Body of pancreas (tissue), 4 donors: ENCODE measurements at regions of chr5 and their contacts with region 1.

Region 1: GRCh38 chr5:79318935-79319614 is 83.1 kb downstream of the JMY start:
- DNase-seq: no peak
- ATAC-seq: no peak
- H3K4me3 ChIP-seq: no peak overlapping the region
- H3K27ac ChIP-seq: no peak overlapping the region
- H3K4me1 ChIP-seq: no peaks in the 10 kb centered on the region
- H3K27me3 ChIP-seq: no peaks in the 10 kb centered on the region
- CTCF ChIP-seq: no peak
- POLR2A ChIP-seq: no peak

Region 2: DNA sequence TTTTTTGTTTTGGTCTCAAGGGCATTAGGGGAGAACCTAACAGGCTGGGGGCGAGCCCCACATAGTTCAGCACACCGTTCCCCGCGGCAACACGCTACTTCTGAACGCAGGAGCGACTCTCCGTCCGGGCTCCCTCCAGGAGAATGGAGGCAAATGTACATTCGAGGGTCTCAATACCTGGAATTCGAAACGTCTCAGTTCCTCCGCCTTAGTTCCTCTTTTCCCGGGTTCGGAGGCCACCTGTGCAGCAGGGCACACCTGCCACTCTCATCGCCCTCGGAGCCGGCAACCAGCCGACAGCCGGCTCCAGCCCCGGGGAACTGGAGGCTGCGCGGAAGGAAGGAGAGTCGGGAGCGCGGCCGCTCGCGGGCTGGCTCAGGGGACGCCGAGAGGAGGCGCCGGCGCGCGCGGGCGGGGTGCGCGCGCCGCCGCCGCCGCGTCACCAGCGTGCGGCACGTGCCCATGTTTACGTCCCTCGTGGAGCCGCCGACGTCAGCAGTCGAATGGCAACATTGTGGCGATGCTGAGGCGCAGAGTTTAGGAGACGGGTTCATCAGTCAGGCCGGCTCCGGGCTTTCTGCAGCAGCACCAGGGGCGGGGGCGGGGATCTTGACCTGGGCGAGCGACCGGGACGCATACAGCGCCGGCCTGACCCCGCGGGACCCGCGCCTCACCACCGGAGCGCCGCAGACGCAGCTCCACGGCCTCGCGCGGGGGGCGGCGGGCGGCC is 83.3 kb before region 1 on chr5 and contains the start of gene JMY:
- intact Hi-C with region 1: no loop called
- DNase-seq: peak; percentile 88 to 92 (median 91)
- ATAC-seq: peak; percentile 90
- H3K4me3 ChIP-seq: peak within 1 kb of the TSS; percentile 80 to 87
- H3K27ac ChIP-seq: peak within 1 kb of the TSS; percentile 76 to 97 (median 90)
- H3K4me1 ChIP-seq: peaks cover 23% of the 10 kb centered on the region
- H3K27me3 ChIP-seq: no peaks in the 10 kb centered on the region
- CTCF ChIP-seq: peak in 2 of 7 experiments; percentile 37 to 39
- POLR2A ChIP-seq: peak; percentile 80 to 94 (median 94)
- total RNA-seq, gene JMY: 11.9 to 15.8 TPM

Region 3: DNA sequence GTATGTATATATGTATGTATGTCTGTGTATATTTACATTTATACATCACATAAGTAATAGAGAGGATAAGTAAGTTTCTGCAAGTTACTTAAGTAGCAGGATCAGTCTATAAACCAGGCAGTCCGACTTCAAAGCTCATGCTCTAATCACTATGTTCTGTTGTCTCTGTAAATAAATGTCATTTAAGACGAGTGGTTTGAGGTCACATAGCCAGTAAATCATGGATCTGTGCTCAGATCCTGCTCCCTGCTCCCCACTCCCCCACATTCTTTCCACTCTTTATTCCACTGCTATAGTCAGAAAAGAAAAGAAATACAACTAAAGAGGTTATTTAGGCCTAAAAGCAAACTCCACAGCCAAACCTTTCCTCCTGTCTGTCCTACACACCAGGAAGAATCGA is 846.4 kb after region 1 on chr5:
- intact Hi-C with region 1: loop called (anchors 10 kb)
- DNase-seq: no peak
- ATAC-seq: no peak
- H3K4me3 ChIP-seq: no peak overlapping the region
- H3K27ac ChIP-seq: no peak overlapping the region
- H3K4me1 ChIP-seq: no peaks in the 10 kb centered on the region
- H3K27me3 ChIP-seq: no peaks in the 10 kb centered on the region
- CTCF ChIP-seq: no peak
- POLR2A ChIP-seq: no peak